ENCODE measurements at regions of chr10 and their contacts with region 1.

Region 1: DNA sequence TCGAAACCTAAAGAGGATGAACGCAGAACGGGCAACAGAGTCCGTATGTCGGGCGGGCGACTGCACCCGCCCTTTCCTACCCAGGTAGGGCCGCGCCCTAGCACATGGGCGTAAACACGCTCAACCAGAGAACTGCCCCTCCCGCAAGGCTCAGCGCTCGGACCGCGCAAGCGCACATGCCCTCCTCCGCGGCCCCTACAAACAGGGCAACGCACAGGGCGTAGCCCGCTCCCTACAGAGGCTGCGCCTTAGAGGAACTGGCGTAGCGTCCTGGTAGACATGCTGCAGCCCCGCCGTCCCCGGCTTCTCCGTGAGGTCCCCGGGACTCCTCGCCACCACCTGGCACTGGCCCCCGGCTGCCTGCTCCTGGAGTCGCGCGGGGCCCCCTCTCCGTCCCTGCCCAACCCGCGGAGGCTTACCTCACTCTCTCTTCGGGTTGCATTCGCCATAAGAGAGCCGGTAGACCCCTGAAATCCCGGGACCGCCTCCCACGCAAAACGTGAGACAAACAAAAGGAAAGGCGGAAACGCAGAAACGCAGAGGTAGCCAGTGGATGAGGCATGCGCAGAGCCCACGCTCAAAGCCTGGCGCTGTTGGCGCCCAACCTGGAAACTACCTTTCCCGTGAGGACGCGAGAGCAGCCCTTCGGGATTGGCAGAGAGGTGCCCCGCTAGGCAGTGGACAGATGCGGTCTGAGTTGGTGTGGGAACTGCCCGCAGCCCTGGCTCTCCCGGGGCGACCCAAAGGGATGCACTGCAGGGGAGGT is at the start of gene ZNF33B:
- DNase-seq: peak; percentile 97
- H3K4me3 ChIP-seq: peak within 1 kb of the TSS; percentile 76
- H3K27ac ChIP-seq: peak within 1 kb of the TSS; percentile 86
- H3K4me1 ChIP-seq: peaks cover 20% of the 10 kb centered on the region
- CTCF ChIP-seq: no peak
- total RNA-seq, gene ZNF33B: 12.6 and 16.9 TPM in 2 replicates

Region 2: DNA sequence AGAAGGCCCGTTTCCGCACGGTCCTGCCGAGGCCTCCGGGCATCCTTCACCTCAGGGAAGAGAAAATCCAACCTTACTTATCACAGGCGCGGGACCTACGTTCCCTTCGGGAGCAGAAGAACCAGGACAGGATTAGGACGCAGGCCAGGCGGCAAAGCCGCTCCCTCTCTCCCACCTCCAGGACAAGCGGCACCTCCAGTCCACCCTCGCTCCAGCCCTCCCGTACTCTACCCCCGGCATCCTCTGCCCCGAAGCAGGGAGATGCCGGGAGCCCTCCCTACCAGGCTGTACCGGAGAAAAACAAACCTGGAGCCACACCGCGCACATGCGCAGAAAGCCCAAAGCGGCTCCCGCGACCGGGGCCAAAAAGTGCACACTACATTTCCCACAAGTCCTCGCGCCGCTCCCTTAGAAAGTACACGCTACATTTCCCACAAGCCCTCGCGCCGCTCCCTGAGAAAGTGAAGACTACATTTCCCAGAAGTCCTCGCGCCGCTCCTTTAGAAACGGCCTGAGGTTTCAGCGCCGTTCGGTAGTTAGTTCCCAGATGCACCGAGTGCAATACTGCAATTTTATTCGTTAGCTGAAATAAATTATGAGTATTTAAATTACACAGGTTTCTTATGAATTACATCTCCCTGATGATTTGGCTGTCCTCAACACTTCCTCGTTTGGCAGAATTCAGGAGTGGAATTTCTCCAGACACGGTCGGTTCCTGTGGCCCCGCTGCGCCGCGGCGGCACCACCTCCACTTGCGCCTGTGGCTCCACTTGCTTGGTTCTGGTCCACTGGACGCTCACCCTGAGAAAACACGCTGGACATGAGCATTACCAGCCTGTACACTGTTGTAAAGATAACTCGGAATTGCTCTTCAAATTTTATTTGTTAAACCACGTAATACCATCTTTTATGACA is 85.5 kb before region 1 on chr10:
- CTCF ChIA-PET with region 1: no interaction called
- POLR2A ChIA-PET with region 1: no interaction called
- intact Hi-C with region 1: loop called (anchors 1 kb)
- DNase-seq: peak; percentile 97
- H3K4me3 ChIP-seq: peak overlapping the region; percentile 89
- H3K27ac ChIP-seq: peak overlapping the region; percentile 25
- H3K4me1 ChIP-seq: peaks cover 28% of the 10 kb centered on the region
- CTCF ChIP-seq: no peak

Region 3: DNA sequence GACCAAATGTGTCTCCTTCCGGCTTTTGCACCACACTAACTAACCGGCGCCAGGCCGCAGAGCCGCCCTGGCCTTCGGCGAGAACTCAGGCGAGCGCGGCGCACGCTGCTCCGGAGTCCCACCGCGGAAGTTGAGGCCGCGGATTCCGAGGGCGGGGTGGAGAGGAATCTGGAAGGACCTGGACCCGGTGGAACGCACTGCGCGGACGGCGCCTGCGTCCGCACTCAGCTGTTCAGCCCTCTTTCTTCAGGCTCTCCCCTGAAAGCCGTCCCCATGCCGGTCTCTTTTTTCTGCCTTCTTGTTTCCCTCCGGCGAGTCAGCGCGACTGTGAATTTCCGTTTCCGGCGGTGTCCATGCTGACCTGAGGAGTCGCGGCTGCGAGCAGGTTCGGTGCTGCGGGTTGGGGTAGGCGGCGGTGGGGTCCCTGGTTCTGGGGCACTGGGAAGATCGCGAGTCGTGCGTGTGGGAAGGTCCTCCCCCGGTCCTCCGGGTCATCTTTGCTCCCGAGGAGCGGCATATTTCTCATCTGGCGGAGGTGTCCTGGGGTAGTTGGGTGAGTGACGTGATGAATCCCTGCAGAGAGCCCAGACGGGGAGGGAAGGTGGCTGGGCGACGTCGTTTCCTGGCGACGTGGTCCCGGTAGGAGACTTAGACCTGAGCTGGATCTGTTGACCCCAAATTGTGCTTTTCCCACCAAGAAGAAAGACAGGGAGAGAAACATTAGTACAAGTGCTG is 144.4 kb after region 1 on chr10 and contains the start of gene BMS1:
- CTCF ChIA-PET with region 1: no interaction called
- POLR2A ChIA-PET with region 1: no interaction called
- intact Hi-C with region 1: loop called (anchors 2 kb)
- DNase-seq: peak; percentile 91
- H3K4me3 ChIP-seq: peak within 1 kb of the TSS; percentile 90
- H3K27ac ChIP-seq: peak within 1 kb of the TSS; percentile 40
- H3K4me1 ChIP-seq: peaks cover 21% of the 10 kb centered on the region
- CTCF ChIP-seq: no peak
- total RNA-seq, gene BMS1: 14.9 and 17.3 TPM in 2 replicates

Region 4: DNA sequence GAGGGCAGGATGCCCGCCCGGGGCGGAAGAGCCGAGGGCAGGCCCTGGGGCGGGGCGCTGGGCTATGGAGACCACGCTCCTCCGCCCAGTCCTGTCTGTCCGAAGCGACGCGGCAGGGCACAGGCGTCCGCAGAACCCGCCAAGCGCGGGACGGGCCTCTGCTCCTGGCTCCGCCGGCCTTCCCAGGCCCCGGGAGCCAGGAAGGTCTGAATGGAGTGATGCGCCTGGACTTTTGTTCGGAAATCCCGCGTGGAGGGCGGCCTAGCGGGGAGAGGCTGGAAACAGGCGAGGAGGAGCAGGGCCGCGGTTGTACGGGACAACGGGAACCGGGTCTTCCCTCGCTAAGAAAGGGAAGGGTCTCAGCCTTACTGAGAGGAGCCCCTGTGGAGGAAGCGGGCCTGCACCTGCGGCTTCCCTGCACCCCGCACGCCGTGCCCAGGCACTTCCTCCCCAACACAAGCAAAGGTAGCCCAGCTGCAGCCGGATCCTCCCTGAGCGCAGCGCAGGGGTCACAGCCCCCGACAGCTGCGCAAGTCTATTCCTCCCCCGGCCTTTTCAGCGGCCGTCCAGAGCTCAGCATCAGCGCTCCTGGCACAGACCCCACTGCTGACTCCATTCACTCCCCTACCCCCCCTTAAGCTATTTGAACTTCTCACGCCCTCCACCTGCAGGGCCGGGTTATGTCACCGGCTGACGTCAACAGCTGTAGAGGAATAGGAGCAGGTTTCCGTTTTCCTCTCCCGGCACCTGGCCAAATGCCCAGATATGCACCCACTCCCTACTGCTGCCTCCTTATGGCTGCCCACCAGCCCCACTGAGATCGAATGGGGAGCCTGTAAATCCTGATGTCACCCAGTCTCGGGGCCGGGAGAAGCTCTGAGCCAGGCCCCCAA is 295.5 kb after region 1 on chr10:
- CTCF ChIA-PET with region 1: no interaction called
- POLR2A ChIA-PET with region 1: no interaction called
- intact Hi-C with region 1: no loop called
- DNase-seq: no peak
- H3K4me3 ChIP-seq: no peak overlapping the region
- H3K27ac ChIP-seq: no peak overlapping the region
- H3K4me1 ChIP-seq: no peaks in the 10 kb centered on the region
- CTCF ChIP-seq: no peak

Region 5: DNA sequence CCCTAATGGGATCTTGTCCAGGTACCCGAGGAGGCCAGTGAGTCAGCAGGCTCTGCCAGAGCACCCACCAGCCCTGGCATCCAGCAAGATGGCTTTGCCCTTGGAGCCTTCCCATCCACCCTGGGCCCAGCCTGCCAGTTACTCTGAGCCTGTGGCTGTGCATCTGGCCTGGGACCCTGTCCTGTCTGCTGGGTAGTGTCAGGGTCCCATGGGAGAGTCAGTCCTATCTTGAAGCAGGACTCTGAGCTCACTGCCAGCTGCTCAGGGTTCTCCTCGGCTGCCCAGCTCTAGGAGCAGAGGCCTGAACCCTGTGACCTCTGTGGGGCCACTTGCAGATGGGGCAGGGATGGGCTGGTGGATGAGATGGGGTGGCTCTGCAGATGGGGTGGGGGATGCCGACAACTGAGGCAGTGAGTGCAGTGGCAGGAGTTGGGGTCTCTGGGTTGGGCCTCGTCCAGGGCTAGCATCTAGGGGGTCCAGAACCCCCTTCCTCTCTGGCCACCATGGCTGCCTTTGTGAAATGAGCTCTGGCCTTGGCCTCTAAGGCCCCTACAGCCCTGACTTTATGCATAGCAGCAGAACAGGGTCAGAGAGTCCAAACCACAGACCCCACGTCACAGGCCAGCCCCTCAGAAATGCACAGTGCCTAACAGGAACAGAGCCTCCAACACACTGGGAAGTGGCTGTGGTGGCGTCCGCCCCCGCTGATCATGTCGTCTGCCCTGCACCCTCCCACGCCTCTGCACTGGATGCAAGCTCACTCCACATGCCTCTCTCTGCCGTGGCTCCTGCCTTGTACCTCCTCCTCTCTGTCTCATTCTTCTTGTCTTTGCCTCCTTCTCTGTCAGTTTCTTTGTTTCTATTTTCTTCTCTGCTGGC is 350.5 kb after region 1 on chr10:
- CTCF ChIA-PET with region 1: no interaction called
- POLR2A ChIA-PET with region 1: no interaction called
- intact Hi-C with region 1: no loop called
- DNase-seq: no peak
- H3K4me3 ChIP-seq: no peak overlapping the region
- H3K27ac ChIP-seq: no peak overlapping the region
- H3K4me1 ChIP-seq: no peaks in the 10 kb centered on the region
- CTCF ChIP-seq: no peak

Measured in OCI-LY7 (cell line).